Naive thymus-derived CD4-positive, alpha-beta T cell (primary cell): ENCODE measurements at regions of chr12 and their contacts with region 1.

Region 1: GRCh38 chr12:92108651-92109050 is 37.0 kb downstream of the BTG1 start:
- DNase-seq: no peak
- ATAC-seq: peak; percentile 24
- H3K4me3 ChIP-seq: peak overlapping the region; percentile 14
- H3K4me3 Mint-ChIP-seq: peak overlapping the region in 9 of 10 donors; percentile 20 to 91 (median 68)
- H3K27ac ChIP-seq: peak overlapping the region; percentile 51
- H3K27ac Mint-ChIP-seq: peak overlapping the region in 8 of 9 donors; percentile 73 to 92 (median 84)
- H3K4me1 ChIP-seq: peaks cover 10 to 73% of the 10 kb centered on the region in 2 donors
- H3K4me1 Mint-ChIP-seq: peaks cover 55 to 93% (median 83%) of the 10 kb centered on the region in 7 donors
- H3K27me3 ChIP-seq: no peaks in the 10 kb centered on the region
- H3K27me3 Mint-ChIP-seq: no peaks in the 10 kb centered on the region

Region 2: DNA sequence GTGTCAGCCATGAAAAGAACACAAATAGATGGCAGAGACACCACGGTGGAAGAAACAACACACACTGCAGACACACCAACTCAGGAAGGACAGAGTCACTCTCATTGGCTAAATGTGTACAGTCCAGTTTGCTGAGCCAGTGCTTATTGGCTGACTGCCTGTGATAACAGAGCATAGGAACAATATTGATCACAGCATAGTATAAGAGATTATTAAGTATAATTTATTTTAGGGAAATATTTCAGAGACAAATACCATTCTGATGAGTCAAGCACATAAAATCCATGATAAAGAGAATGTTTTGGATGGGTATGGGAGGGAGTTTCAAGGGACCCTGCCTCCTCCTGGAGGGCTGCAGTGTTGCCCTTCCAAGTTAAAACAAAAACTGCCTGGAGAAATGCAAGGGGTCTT is 13.9 kb before region 1 on chr12:
- CTCF ChIA-PET with region 1: interaction called, 4 read pairs
- POLR2A ChIA-PET with region 1: interaction called, 15 read pairs
- intact Hi-C with region 1: loop called in 1 of 2 experiments (anchors 1 kb)
- DNase-seq: no peak
- ATAC-seq: no peak
- H3K4me3 ChIP-seq: no peak overlapping the region
- H3K4me3 Mint-ChIP-seq: peak overlapping the region in 3 of 10 donors; percentile 22 to 35 (median 29)
- H3K27ac ChIP-seq: no peak overlapping the region
- H3K27ac Mint-ChIP-seq: no peak overlapping the region
- H3K4me1 ChIP-seq: peaks cover 6 to 14% of the 10 kb centered on the region in 2 donors
- H3K4me1 Mint-ChIP-seq: peaks cover 17 to 82% (median 68%) of the 10 kb centered on the region in 7 donors
- H3K27me3 ChIP-seq: no peaks in the 10 kb centered on the region
- H3K27me3 Mint-ChIP-seq: no peaks in the 10 kb centered on the region

Region 3: GRCh38 chr12:92118826-92119536 is 10.3 kb after region 1 on chr12:
- CTCF ChIA-PET with region 1: interaction called, 3 read pairs
- POLR2A ChIA-PET with region 1: interaction called, 40 read pairs
- intact Hi-C with region 1: loop called in 1 of 2 experiments (anchors 2 kb)
- DNase-seq: no peak
- ATAC-seq: no peak
- H3K4me3 ChIP-seq: no peak overlapping the region
- H3K4me3 Mint-ChIP-seq: peak overlapping the region in 3 of 10 donors; percentile 27 to 50 (median 45)
- H3K27ac ChIP-seq: no peak overlapping the region
- H3K27ac Mint-ChIP-seq: peak overlapping the region in 7 of 9 donors; percentile 24 to 64 (median 48)
- H3K4me1 ChIP-seq: peaks cover 16 to 21% of the 10 kb centered on the region in 2 donors
- H3K4me1 Mint-ChIP-seq: peaks cover 34 to 69% (median 63%) of the 10 kb centered on the region in 7 donors
- H3K27me3 ChIP-seq: no peaks in the 10 kb centered on the region
- H3K27me3 Mint-ChIP-seq: no peaks in the 10 kb centered on the region

Region 4: GRCh38 chr12:92123780-92124688 is 15.4 kb after region 1 on chr12:
- CTCF ChIA-PET with region 1: interaction called, 5 read pairs
- POLR2A ChIA-PET with region 1: interaction called, 25 read pairs
- intact Hi-C with region 1: loop called in 1 of 2 experiments (anchors 2 kb)
- DNase-seq: no peak
- ATAC-seq: peak; percentile 44
- H3K4me3 ChIP-seq: peak overlapping the region; percentile 14
- H3K4me3 Mint-ChIP-seq: peak overlapping the region; percentile 27 to 94 (median 68)
- H3K27ac ChIP-seq: no peak overlapping the region
- H3K27ac Mint-ChIP-seq: peak overlapping the region; percentile 24 to 82 (median 65)
- H3K4me1 ChIP-seq: peaks cover 3 to 47% of the 10 kb centered on the region in 2 donors
- H3K4me1 Mint-ChIP-seq: peaks cover 47 to 76% (median 72%) of the 10 kb centered on the region in 7 donors
- H3K27me3 ChIP-seq: no peaks in the 10 kb centered on the region
- H3K27me3 Mint-ChIP-seq: no peaks in the 10 kb centered on the region

Region 5: DNA sequence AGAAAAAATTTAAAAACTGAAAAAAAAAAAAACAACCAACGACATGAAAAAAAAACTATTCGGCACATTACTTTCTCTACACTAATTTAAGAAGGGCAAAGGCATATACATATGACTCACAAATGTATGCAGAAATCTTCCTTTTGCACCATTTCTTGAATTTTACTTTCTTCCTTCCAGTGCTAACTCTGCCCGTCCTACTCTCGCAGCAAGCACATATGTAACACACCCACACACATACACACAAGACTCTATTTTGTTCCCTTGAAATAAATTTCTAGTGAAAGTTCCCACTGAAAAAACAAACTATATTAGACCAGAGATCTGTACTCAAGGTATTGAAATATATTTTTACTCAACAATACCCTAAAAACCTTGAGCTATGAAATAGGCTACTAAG is 22.3 kb after region 1 on chr12:
- CTCF ChIA-PET with region 1: interaction called, 5 read pairs
- POLR2A ChIA-PET with region 1: interaction called, 25 read pairs
- intact Hi-C with region 1: no loop called
- DNase-seq: no peak
- ATAC-seq: no peak
- H3K4me3 ChIP-seq: peak overlapping the region; percentile 10
- H3K4me3 Mint-ChIP-seq: peak overlapping the region; percentile 79 to 100 (median 96)
- H3K27ac ChIP-seq: peak overlapping the region; percentile 91
- H3K27ac Mint-ChIP-seq: peak overlapping the region; percentile 87 to 100 (median 93)
- H3K4me1 ChIP-seq: peaks cover 49 to 78% of the 10 kb centered on the region in 2 donors
- H3K4me1 Mint-ChIP-seq: peaks cover 69 to 100% (median 86%) of the 10 kb centered on the region in 7 donors
- H3K27me3 ChIP-seq: no peaks in the 10 kb centered on the region
- H3K27me3 Mint-ChIP-seq: no peaks in the 10 kb centered on the region

Region 6: GRCh38 chr12:92278378-92278828 is 169.8 kb after region 1 on chr12:
- CTCF ChIA-PET with region 1: no interaction called
- POLR2A ChIA-PET with region 1: no interaction called
- intact Hi-C with region 1: no loop called
- DNase-seq: no peak
- ATAC-seq: no peak
- H3K4me3 ChIP-seq: no peak overlapping the region
- H3K4me3 Mint-ChIP-seq: no peak overlapping the region
- H3K27ac ChIP-seq: no peak overlapping the region
- H3K27ac Mint-ChIP-seq: peak overlapping the region in 1 of 9 donors; percentile 8
- H3K4me1 ChIP-seq: no peaks in the 10 kb centered on the region
- H3K4me1 Mint-ChIP-seq: peaks cover 8 to 26% (median 22%) of the 10 kb centered on the region in 7 donors
- H3K27me3 ChIP-seq: no peaks in the 10 kb centered on the region
- H3K27me3 Mint-ChIP-seq: no peaks in the 10 kb centered on the region

Region 7: GRCh38 chr12:92408072-92408900 is 299.6 kb after region 1 on chr12:
- CTCF ChIA-PET with region 1: no interaction called
- POLR2A ChIA-PET with region 1: no interaction called
- intact Hi-C with region 1: no loop called
- DNase-seq: peak in 3 of 9 donors; percentile 29 to 40 (median 30)
- ATAC-seq: peak; percentile 34
- H3K4me3 ChIP-seq: no peak overlapping the region
- H3K4me3 Mint-ChIP-seq: peak overlapping the region in 4 of 10 donors; percentile 18 to 58 (median 28)
- H3K27ac ChIP-seq: no peak overlapping the region
- H3K27ac Mint-ChIP-seq: peak overlapping the region in 8 of 9 donors; percentile 30 to 89 (median 72)
- H3K4me1 ChIP-seq: peaks cover 30 to 33% of the 10 kb centered on the region in 2 donors
- H3K4me1 Mint-ChIP-seq: peaks cover 21 to 80% (median 67%) of the 10 kb centered on the region in 7 donors
- H3K27me3 ChIP-seq: no peaks in the 10 kb centered on the region
- H3K27me3 Mint-ChIP-seq: no peaks in the 10 kb centered on the region